Mucosa of descending colon (tissue), 3 donors: ENCODE measurements at regions of chr13 and their contacts with region 1.

Region 1: GRCh38 chr13:36858290-36858689 is 39.3 kb downstream of the RFXAP start:
- DNase-seq: peak in 1 of 3 donors; percentile 18
- ATAC-seq: peak; percentile 86
- H3K4me3 ChIP-seq: no peak overlapping the region
- H3K4me1 ChIP-seq: no peaks in the 10 kb centered on the region
- CTCF ChIP-seq: no peak

Region 2: GRCh38 chr13:36903925-36904595 is 45.8 kb after region 1 on chr13:
- intact Hi-C with region 1: no loop called
- DNase-seq: peak in 1 of 3 donors; percentile 51
- ATAC-seq: peak; percentile 93
- H3K4me3 ChIP-seq: no peak overlapping the region
- H3K4me1 ChIP-seq: no peaks in the 10 kb centered on the region
- CTCF ChIP-seq: no peak

Region 3: DNA sequence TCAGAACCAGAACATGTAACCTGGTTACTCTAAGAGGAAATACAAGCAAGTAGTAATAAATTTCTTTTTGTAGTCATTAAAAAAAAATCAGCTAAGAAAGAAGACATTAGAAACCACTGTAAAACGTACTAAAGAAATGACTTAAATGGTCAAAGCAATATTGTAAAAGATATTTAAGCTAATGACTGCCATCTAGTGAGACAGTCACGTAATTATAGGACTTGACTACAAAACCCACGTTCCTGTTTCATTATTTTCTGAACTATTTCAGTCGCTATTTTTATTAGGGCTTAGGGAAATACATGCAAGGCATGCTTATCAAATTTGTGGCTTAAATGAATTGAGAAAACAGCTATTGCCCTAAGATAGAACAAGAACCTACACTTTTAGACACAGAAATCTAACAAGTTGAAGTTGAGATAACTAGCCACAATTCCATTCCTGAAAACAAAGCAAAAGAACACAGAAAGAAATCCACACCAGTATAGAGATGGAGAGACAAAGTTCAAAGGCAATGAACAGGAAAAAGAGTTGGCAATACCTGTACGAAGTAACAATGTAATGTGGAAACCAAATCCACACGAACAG is 123.0 kb after region 1 on chr13:
- intact Hi-C with region 1: loop called (anchors 5 kb)
- DNase-seq: no peak
- ATAC-seq: no peak
- H3K4me3 ChIP-seq: no peak overlapping the region
- H3K4me1 ChIP-seq: no peaks in the 10 kb centered on the region
- CTCF ChIP-seq: no peak